ENCODE measurements at regions of chr22 and their contacts with region 1.

Region 1: DNA sequence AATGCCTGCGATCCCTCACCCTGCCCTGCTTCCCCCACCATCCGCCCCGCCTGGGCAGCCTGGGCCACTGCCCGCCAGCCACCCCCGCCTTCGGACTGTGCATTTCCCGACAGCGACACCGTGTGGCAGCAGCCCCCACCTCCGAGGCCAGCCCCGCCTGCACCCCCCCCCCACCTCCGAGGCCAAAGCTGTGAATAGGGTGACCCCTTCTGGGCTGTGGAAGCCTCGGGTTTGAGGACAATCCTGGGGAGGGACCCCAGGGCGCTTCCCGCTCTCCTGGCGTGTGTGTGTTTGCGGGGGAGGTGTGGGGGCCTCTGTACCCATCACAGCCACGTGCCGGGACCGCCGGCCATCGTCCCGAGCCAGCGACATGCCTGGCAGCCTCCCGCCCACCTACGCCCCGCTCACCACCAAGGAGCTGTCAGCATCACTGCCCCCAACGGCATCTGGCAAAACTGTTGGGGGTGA is 33.8 kb upstream of the PPARA start:
- DNase-seq: peak; percentile 76 to 92 (median 85)
- ATAC-seq: peak; percentile 97
- H3K4me3 ChIP-seq: no peak overlapping the region
- H3K4me3 Mint-ChIP-seq: no peak overlapping the region
- H3K27ac ChIP-seq: no peak overlapping the region
- H3K27ac Mint-ChIP-seq: no peak overlapping the region
- H3K4me1 ChIP-seq: peaks cover 11% of the 10 kb centered on the region
- H3K4me1 Mint-ChIP-seq: no peaks in the 10 kb centered on the region
- H3K27me3 ChIP-seq: no peaks in the 10 kb centered on the region
- H3K27me3 Mint-ChIP-seq: no peaks in the 10 kb centered on the region
- CTCF ChIP-seq: peak; percentile 80

Region 2: GRCh38 chr22:45863981-45864751 is 252.4 kb before region 1 on chr22:
- CTCF ChIA-PET with region 1: no interaction called
- POLR2A ChIA-PET with region 1: no interaction called
- intact Hi-C with region 1: loop called in 1 of 2 experiments (anchors 10 kb)
- DNase-seq: peak; percentile 44 to 74 (median 60)
- ATAC-seq: peak; percentile 81
- H3K4me3 ChIP-seq: no peak overlapping the region
- H3K4me3 Mint-ChIP-seq: no peak overlapping the region
- H3K27ac ChIP-seq: no peak overlapping the region
- H3K27ac Mint-ChIP-seq: no peak overlapping the region
- H3K4me1 ChIP-seq: peaks cover 8% of the 10 kb centered on the region
- H3K4me1 Mint-ChIP-seq: peaks cover 13% of the 10 kb centered on the region
- H3K27me3 ChIP-seq: peaks cover 15 to 41% of the 10 kb centered on the region in 2 experiments
- H3K27me3 Mint-ChIP-seq: peaks cover 35% of the 10 kb centered on the region
- CTCF ChIP-seq: peak; percentile 83

Region 3: GRCh38 chr22:45994491-45995404 is 121.8 kb before region 1 on chr22:
- CTCF ChIA-PET with region 1: interaction called, 9 read pairs
- POLR2A ChIA-PET with region 1: no interaction called
- intact Hi-C with region 1: loop called (anchors 1 kb)
- DNase-seq: peak; percentile 58 to 89 (median 76)
- ATAC-seq: peak; percentile 83
- H3K4me3 ChIP-seq: no peak overlapping the region
- H3K4me3 Mint-ChIP-seq: no peak overlapping the region
- H3K27ac ChIP-seq: no peak overlapping the region
- H3K27ac Mint-ChIP-seq: no peak overlapping the region
- H3K4me1 ChIP-seq: peaks cover 21% of the 10 kb centered on the region
- H3K4me1 Mint-ChIP-seq: peaks cover 4% of the 10 kb centered on the region
- H3K27me3 ChIP-seq: peaks cover 0 to 3% of the 10 kb centered on the region in 2 experiments
- H3K27me3 Mint-ChIP-seq: peaks cover 9% of the 10 kb centered on the region
- CTCF ChIP-seq: peak; percentile 98

Region 4: GRCh38 chr22:46013460-46014416 is 102.8 kb before region 1 on chr22:
- CTCF ChIA-PET with region 1: interaction called, 26 read pairs
- POLR2A ChIA-PET with region 1: interaction called, 8 read pairs
- intact Hi-C with region 1: no loop called
- DNase-seq: peak; percentile 66 to 94 (median 84)
- ATAC-seq: peak; percentile 83
- H3K4me3 ChIP-seq: peak overlapping the region; percentile 94
- H3K4me3 Mint-ChIP-seq: peak overlapping the region; percentile 89
- H3K27ac ChIP-seq: peak overlapping the region; percentile 58 to 87
- H3K27ac Mint-ChIP-seq: peak overlapping the region; percentile 86
- H3K4me1 ChIP-seq: peaks cover 20% of the 10 kb centered on the region
- H3K4me1 Mint-ChIP-seq: peaks cover 12% of the 10 kb centered on the region
- H3K27me3 ChIP-seq: peaks cover 0 to 2% of the 10 kb centered on the region in 2 experiments
- H3K27me3 Mint-ChIP-seq: no peaks in the 10 kb centered on the region
- CTCF ChIP-seq: peak; percentile 77

Region 5: GRCh38 chr22:46071451-46072109 is 44.9 kb before region 1 on chr22:
- CTCF ChIA-PET with region 1: interaction called, 3 read pairs
- POLR2A ChIA-PET with region 1: interaction called, 3 read pairs
- intact Hi-C with region 1: loop called in 1 of 2 experiments (anchors 2 kb)
- DNase-seq: peak; percentile 45 to 80 (median 60)
- ATAC-seq: peak; percentile 28
- H3K4me3 ChIP-seq: peak overlapping the region; percentile 38
- H3K4me3 Mint-ChIP-seq: peak overlapping the region; percentile 90
- H3K27ac ChIP-seq: peak overlapping the region in 1 of 2 donors; percentile 46
- H3K27ac Mint-ChIP-seq: peak overlapping the region; percentile 78
- H3K4me1 ChIP-seq: peaks cover 56% of the 10 kb centered on the region
- H3K4me1 Mint-ChIP-seq: peaks cover 55% of the 10 kb centered on the region
- H3K27me3 ChIP-seq: peaks cover 0 to 10% of the 10 kb centered on the region in 2 experiments
- H3K27me3 Mint-ChIP-seq: no peaks in the 10 kb centered on the region
- CTCF ChIP-seq: no peak

Region 6: GRCh38 chr22:46090631-46091201 is 25.8 kb before region 1 on chr22:
- CTCF ChIA-PET with region 1: no interaction called
- POLR2A ChIA-PET with region 1: no interaction called
- intact Hi-C with region 1: no loop called
- DNase-seq: no peak
- ATAC-seq: no peak
- H3K4me3 ChIP-seq: no peak overlapping the region
- H3K4me3 Mint-ChIP-seq: no peak overlapping the region
- H3K27ac ChIP-seq: no peak overlapping the region
- H3K27ac Mint-ChIP-seq: no peak overlapping the region
- H3K4me1 ChIP-seq: no peaks in the 10 kb centered on the region
- H3K4me1 Mint-ChIP-seq: no peaks in the 10 kb centered on the region
- H3K27me3 ChIP-seq: no peaks in the 10 kb centered on the region
- H3K27me3 Mint-ChIP-seq: no peaks in the 10 kb centered on the region
- CTCF ChIP-seq: no peak

Region 7: DNA sequence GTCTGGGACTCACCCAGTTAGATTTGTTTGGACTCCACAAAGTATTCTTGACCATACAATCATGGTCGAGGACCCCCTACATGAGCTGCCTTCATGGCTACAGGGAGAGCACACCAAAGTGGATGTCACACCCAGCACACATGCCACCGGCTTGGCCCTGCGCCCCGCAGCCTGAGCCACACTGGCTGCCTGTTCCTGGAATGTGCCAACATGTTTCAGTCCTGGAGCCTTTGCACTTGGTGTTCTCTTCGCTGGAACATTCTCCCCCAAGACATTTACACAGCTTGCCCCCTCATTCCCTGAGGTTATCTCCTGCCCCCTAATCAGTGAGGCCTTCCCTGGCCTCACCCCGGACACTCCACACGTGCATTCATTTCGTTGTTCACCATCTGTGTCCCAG is 79.8 kb after region 1 on chr22:
- CTCF ChIA-PET with region 1: no interaction called
- POLR2A ChIA-PET with region 1: no interaction called
- intact Hi-C with region 1: no loop called
- DNase-seq: no peak
- ATAC-seq: no peak
- H3K4me3 ChIP-seq: no peak overlapping the region
- H3K4me3 Mint-ChIP-seq: no peak overlapping the region
- H3K27ac ChIP-seq: no peak overlapping the region
- H3K27ac Mint-ChIP-seq: no peak overlapping the region
- H3K4me1 ChIP-seq: no peaks in the 10 kb centered on the region
- H3K4me1 Mint-ChIP-seq: no peaks in the 10 kb centered on the region
- H3K27me3 ChIP-seq: no peaks in the 10 kb centered on the region
- H3K27me3 Mint-ChIP-seq: no peaks in the 10 kb centered on the region
- CTCF ChIP-seq: no peak

Measured in CD4-positive, alpha-beta T cell (primary cell).